ENCODE measurements at regions of chr19 and their contacts with region 1.

Region 1: GRCh38 chr19:42140125-42140754 is 8.0 kb upstream of the POU2F2 start:
- DNase-seq: no peak
- H3K4me3 ChIP-seq: no peak overlapping the region
- H3K27ac ChIP-seq: no peak overlapping the region
- H3K27me3 ChIP-seq: peaks cover 9% of the 10 kb centered on the region
- CTCF ChIP-seq: no peak

Region 2: DNA sequence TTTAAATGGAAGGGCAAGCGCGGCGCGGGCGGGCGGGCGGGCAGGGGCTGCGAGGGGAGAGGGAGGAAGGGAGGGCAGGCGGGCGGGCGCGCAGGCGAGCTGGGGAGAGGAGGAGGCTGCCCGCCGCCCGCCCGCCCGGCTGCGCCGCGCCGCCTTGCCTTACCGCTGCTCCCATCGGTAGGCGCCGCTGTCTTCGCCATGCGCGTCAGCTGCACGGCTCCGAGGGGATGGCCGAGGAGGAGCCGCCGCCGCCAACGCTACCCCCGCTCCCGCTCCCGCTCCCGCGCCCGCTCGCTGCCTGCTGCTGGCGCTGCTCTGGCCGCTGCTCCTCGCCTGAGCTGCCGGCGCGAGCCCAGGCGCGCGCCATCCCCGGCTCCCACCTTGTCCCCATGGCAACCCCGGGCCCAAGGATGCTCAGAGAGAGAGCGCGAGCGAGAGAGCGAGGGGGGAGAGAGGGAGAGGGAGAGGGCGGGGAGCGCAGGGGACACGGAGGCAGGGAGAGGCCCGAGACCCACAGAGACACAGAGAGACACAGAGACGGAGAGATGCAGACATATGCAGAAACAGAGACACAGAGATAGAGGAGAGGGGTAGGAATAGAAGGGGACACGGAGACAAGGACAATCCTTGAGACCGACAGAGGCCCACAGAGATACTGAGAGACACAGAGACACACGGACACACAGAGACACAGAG is 36.9 kb after region 1 on chr19:
- CTCF ChIA-PET with region 1: interaction called, 13 read pairs
- POLR2A ChIA-PET with region 1: no interaction called
- DNase-seq: peak; percentile 32
- H3K4me3 ChIP-seq: peak overlapping the region; percentile 60
- H3K27ac ChIP-seq: no peak overlapping the region
- H3K27me3 ChIP-seq: peaks cover 67% of the 10 kb centered on the region
- CTCF ChIP-seq: peak; percentile 40

Region 3: GRCh38 chr19:42244347-42245220 is 104.3 kb after region 1 on chr19:
- CTCF ChIA-PET with region 1: no interaction called
- POLR2A ChIA-PET with region 1: no interaction called
- DNase-seq: peak; percentile 85
- H3K4me3 ChIP-seq: peak overlapping the region; percentile 79
- H3K27ac ChIP-seq: peak overlapping the region; percentile 65
- H3K27me3 ChIP-seq: no peaks in the 10 kb centered on the region
- CTCF ChIP-seq: peak; percentile 71

Measured in AG04450 (cell line).